Caco-2 (cell line): ENCODE measurements at regions of chr15 and their contacts with region 1.

Region 1: DNA sequence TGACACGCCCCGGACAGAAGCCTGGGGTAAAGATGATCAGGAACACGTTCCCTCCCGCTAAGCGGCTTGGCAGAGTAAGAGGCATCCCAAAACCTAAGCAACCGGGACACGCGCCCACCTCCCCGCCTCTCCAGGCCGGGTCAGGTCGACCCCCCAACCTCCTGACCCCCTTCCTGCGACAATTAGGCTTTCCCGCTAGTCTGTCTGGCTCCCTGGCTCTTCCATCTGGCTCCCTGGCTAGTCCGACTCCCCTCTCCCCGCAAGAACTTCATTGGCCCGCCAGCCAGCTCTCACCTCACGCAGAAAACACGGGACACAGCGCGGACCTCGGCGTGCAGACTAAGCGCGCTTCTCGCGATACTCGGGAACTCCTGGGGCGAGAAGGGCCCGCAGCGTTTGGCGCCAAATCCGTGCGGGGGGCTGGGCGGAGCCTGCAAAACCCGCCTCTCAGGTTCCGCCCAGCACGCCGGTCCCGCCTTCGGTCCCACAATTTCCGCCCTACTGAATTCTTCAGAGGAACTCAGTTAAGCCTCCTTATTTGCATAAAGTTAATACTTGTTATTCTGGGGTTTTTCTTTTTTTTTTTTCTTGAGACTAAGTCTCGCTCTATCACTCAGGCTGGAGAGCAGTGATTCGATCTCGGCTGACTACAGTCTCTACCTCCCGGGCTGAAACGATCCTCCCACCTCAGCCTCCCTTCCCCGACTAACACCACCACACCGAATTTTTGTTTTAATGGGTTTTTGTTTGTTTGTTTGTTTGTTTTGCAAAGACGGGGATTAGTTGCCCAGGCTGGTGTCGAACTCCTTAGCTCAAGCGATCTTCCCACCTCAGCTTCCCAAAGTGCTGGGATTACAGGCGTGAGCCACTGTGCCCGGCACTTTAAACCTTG is at the start of gene TIPIN:
- DNase-seq: peak; percentile 96
- H3K4me3 ChIP-seq: peak within 1 kb of the TSS; percentile 97
- H3K4me3 Mint-ChIP-seq: peak within 1 kb of the TSS; percentile 95
- H3K27ac Mint-ChIP-seq: peak within 1 kb of the TSS; percentile 99
- H3K4me1 ChIP-seq: 0 out of 2 replicates have a peak, but pooled peaks cover 5% of the 10 kb centered on the region
- H3K4me1 Mint-ChIP-seq: peaks cover 9% of the 10 kb centered on the region
- H3K27me3 ChIP-seq: no peaks in the 10 kb centered on the region
- H3K27me3 Mint-ChIP-seq: no peaks in the 10 kb centered on the region
- CTCF ChIP-seq: no peak
- total RNA-seq, gene TIPIN: 22.8 and 28.0 TPM in 2 replicates

Region 2: GRCh38 chr15:66497502-66498455 is 141.2 kb after region 1 on chr15 and contains the start of gene SNAPC5:
- CTCF ChIA-PET with region 1: interaction called, 3 read pairs
- POLR2A ChIA-PET with region 1: no interaction called
- intact Hi-C with region 1: loop called (anchors 2 kb)
- DNase-seq: peak; percentile 95 to 97
- H3K4me3 ChIP-seq: peak within 1 kb of the TSS; percentile 66
- H3K4me3 Mint-ChIP-seq: peak within 1 kb of the TSS; percentile 92
- H3K27ac Mint-ChIP-seq: peak within 1 kb of the TSS; percentile 93
- H3K4me1 ChIP-seq: peaks cover 4% of the 10 kb centered on the region; the same call in 1 of the 2 replicates
- H3K4me1 Mint-ChIP-seq: peaks cover 10% of the 10 kb centered on the region
- H3K27me3 ChIP-seq: no peaks in the 10 kb centered on the region
- H3K27me3 Mint-ChIP-seq: no peaks in the 10 kb centered on the region
- CTCF ChIP-seq: peak; percentile 88 to 96
- total RNA-seq, gene SNAPC5: 28.1 and 31.4 TPM in 2 replicates

Region 3: DNA sequence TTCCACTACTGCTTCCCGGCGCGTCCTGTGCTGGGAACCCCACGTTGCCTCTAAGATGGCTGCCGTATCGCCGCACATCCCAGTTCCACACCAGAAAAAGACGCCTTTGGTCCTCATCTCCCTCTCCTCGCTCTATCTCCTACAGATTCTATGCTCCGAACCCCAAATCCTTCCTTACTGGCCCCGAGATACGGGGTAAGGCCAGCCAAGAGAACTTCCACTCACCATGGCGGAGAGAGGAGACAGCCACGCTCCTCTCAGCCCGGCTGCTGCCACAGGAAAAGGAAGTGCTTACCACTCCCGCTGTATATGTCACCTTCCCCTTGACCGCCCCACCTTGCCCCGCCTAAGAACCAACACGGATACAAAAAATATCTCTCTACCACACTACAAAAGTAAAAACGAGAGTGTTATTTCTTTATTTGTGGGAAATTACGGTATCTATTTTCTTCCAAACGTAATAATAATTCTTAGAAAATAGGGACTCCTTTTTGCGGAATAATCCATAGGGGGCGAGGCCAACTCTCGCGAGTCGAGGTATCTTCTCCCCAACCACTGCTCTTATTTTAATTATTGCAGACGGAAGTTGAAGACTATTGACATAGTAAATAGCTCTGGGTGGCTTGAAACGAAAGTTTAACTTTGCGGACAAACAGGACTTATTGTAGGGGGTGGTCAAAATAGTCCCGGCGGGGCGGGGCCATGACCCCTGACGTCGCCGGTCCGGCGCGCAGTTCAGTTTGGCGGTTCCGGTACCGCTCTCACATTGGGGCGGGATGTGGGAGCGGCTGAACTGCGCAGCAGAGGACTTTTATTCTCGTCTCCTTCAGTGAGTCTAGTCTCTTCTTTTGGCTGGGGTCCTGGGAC is 148.2 kb after region 1 on chr15 and contains the starts of genes RPL4 and ZWILCH:
- CTCF ChIA-PET with region 1: no interaction called
- POLR2A ChIA-PET with region 1: no interaction called
- intact Hi-C with region 1: loop called (anchors 2 kb)
- DNase-seq: peak; percentile 78 to 83
- H3K4me3 ChIP-seq: peak within 1 kb of the TSS; percentile 68
- H3K4me3 Mint-ChIP-seq: peak within 1 kb of the TSS; percentile 96
- H3K27ac Mint-ChIP-seq: peak within 1 kb of the TSS; percentile 100
- H3K4me1 ChIP-seq: peaks cover 6% of the 10 kb centered on the region; the same call in 1 of the 2 replicates
- H3K4me1 Mint-ChIP-seq: peaks cover 15% of the 10 kb centered on the region
- H3K27me3 ChIP-seq: no peaks in the 10 kb centered on the region
- H3K27me3 Mint-ChIP-seq: no peaks in the 10 kb centered on the region
- CTCF ChIP-seq: no peak
- total RNA-seq, gene RPL4: 3,043 and 3,102 TPM in 2 replicates
- total RNA-seq, gene ZWILCH: 21.6 and 28.1 TPM in 2 replicates